PC-9 (cell line): ENCODE measurements at regions of chr2 and their contacts with region 1.

Region 1: GRCh38 chr2:27890146-27890923 is at the starts of genes BABAM2 and RBKS:
- DNase-seq: peak; percentile 75 to 91
- H3K4me3 ChIP-seq: peak within 1 kb of the TSS; percentile 81
- H3K27ac ChIP-seq: peak within 1 kb of the TSS; percentile 96
- H3K4me1 ChIP-seq: peaks cover 41% of the 10 kb centered on the region
- H3K27me3 ChIP-seq: no peaks in the 10 kb centered on the region
- CTCF ChIP-seq: no peak
- total RNA-seq, gene BABAM2: 45.9 and 46.1 TPM in 2 replicates
- total RNA-seq, gene RBKS: 4.5 and 6.8 TPM in 2 replicates

Region 2: GRCh38 chr2:27723372-27724144 is 166.8 kb before region 1 on chr2:
- CTCF ChIA-PET with region 1: no interaction called
- POLR2A ChIA-PET with region 1: no interaction called
- intact Hi-C with region 1: loop called (anchors 1 kb)
- DNase-seq: peak; percentile 52 to 55
- H3K4me3 ChIP-seq: no peak overlapping the region
- H3K27ac ChIP-seq: peak overlapping the region; percentile 92
- H3K4me1 ChIP-seq: peaks cover 64% of the 10 kb centered on the region
- H3K27me3 ChIP-seq: no peaks in the 10 kb centered on the region
- CTCF ChIP-seq: peak; percentile 91

Region 3: DNA sequence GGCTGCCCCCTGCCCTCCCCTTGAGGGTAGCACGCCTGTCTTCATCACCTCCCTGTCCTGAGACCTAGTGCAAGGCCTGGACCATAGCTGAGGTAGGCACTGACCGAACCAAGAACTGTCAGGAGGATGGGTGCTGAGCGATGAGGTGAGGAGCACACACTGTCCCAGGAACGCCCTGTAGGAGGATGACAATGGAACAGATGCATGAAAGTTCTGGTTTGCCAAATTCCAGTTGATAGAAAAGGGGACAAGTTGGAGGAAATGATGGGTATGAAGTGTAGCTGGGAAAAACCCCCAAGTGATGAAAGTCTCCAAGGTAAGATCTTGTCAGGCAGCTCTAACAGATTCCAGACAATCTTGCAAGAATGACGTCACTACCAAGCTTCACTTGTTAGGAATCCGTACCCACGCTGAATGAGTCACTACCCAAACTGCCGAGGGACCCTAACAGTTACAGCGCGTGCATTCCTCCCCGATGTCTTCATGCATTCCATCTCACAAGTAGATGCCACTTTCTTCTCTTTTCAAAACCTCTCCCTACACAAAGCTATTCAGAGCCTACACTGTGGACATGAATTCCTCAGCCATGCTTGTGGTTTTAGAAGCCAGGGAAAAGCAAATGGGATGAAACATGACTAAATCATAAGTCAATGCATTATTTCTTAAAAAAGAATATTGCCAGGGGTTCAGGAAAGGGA is 91.2 kb before region 1 on chr2:
- CTCF ChIA-PET with region 1: no interaction called
- POLR2A ChIA-PET with region 1: interaction called, 7 read pairs
- intact Hi-C with region 1: loop called (anchors 1 kb)
- DNase-seq: peak; percentile 89 to 100
- H3K4me3 ChIP-seq: peak overlapping the region; percentile 3; the same call in 1 of the 2 replicates
- H3K27ac ChIP-seq: peak overlapping the region; percentile 94
- H3K4me1 ChIP-seq: peaks cover 40% of the 10 kb centered on the region
- H3K27me3 ChIP-seq: no peaks in the 10 kb centered on the region
- CTCF ChIP-seq: no peak

Region 4: GRCh38 chr2:27860111-27860510 is 30.2 kb before region 1 on chr2:
- CTCF ChIA-PET with region 1: no interaction called
- POLR2A ChIA-PET with region 1: no interaction called
- intact Hi-C with region 1: no loop called
- DNase-seq: peak in 1 of 2 experiments; percentile 79
- H3K4me3 ChIP-seq: no peak overlapping the region
- H3K27ac ChIP-seq: peak overlapping the region; percentile 36
- H3K4me1 ChIP-seq: peaks cover 47% of the 10 kb centered on the region
- H3K27me3 ChIP-seq: no peaks in the 10 kb centered on the region
- CTCF ChIP-seq: no peak

Region 5: DNA sequence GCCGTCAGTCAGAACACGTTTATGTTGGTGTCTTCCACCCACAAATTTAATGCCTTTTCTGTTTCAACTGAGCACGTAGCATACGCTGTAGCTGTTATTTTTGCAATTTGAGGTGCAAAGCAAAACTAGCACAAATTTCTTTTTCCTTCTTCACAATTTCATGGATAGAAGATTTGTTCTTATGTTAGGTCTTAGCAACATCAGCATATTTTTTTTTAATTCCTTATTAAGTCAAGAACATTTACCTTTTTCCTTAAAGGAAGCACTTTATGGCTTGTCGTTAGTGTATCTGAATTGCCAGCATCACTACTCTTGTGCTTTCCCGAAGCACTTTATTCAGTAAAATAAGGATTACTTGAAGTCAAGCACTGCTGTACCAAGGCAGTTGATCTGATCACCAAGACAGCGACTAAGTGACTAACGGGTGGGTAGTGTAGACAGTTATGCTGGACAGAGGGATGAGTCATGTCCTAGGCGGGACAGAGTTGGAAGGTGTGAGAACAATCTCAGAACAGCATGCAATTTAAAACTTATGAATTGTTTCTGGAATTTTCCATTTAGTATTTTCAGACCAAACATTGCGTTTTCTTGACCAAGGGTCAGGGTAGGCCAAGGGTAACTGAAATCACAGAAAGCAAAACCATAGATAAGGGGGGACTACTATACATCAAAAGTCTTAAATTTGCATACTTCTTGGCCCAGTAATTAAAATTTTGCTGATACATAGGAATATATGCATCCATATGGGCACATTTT is 13.5 kb after region 1 on chr2:
- CTCF ChIA-PET with region 1: no interaction called
- POLR2A ChIA-PET with region 1: no interaction called
- intact Hi-C with region 1: no loop called
- DNase-seq: no peak
- H3K4me3 ChIP-seq: no peak overlapping the region
- H3K27ac ChIP-seq: no peak overlapping the region
- H3K4me1 ChIP-seq: no peaks in the 10 kb centered on the region
- H3K27me3 ChIP-seq: no peaks in the 10 kb centered on the region
- CTCF ChIP-seq: no peak

Region 6: GRCh38 chr2:27932396-27932795 is 42.1 kb after region 1 on chr2:
- CTCF ChIA-PET with region 1: no interaction called
- POLR2A ChIA-PET with region 1: no interaction called
- intact Hi-C with region 1: loop called (anchors 2 kb)
- DNase-seq: peak; percentile 37 to 94
- H3K4me3 ChIP-seq: no peak overlapping the region
- H3K27ac ChIP-seq: peak overlapping the region; percentile 70
- H3K4me1 ChIP-seq: peaks cover 20% of the 10 kb centered on the region
- H3K27me3 ChIP-seq: no peaks in the 10 kb centered on the region
- CTCF ChIP-seq: no peak